Activated T-helper 1 cell treated with anti-CD3 and anti-CD28 coated beads, Interleukin-12 subunit alpha, Interleukin-12 subunit beta, Interleukin-2, Interleukin-4 antibody, amounts not matched to agents 30 ng/mL and 10 ng/mL and 1 ng/mL, durations not matched to agents 14 hours and 24 hours and 36 hours (primary cell): ENCODE measurements at regions of chr7 and their contacts with region 1.

Region 1: GRCh38 chr7:568031-568951 is 48.6 kb upstream of the PDGFA start:
- DNase-seq: no peak
- H3K4me3 Mint-ChIP-seq: no peak overlapping the region
- H3K27ac Mint-ChIP-seq: no peak overlapping the region
- H3K4me1 Mint-ChIP-seq: no peaks in the 10 kb centered on the region
- H3K27me3 Mint-ChIP-seq: no peaks in the 10 kb centered on the region

Region 2: DNA sequence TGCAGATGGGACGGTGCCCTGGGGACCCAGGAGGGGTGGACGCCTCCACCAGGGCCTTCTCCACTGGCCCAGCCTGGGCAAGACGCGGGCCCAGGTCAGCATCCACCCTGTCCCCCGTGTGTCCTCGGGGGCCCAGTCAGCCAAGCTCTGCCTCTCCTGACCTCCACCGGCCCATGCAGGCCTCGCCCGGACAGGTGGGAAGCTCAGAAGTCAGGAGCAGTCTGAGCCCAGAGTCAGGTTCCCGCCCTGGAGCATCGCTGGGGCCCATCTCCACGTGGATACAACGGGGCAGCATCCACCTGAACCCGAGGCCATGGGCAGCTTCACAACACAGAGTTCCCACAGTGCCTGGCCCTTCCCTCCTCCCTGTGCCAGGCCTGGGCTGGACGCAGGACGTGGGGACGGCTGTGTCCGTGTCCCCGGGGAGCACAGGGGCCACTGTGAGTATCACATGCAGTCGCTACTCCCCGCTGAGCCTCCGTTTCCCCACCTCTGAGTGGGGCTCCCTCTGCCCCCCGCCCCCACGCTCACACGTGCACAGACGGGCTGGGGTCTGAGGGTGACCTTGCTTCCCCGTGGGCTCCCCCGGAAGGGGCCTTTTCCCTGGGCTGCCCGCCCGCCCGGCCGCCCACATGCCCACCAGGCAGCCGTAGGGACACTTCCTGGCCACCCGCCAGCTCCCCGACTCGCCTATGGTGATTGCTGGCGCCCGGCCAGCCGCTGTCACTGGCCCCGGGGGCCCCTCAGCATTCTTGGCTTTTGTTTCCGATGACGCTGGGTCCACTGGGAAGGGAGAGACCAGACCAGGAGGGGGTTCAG is 113.0 kb before region 1 on chr7:
- intact Hi-C with region 1: loop called (anchors 10 kb)
- DNase-seq: no peak
- H3K4me3 Mint-ChIP-seq: no peak overlapping the region
- H3K27ac Mint-ChIP-seq: no peak overlapping the region
- H3K4me1 Mint-ChIP-seq: peaks cover 6% of the 10 kb centered on the region
- H3K27me3 Mint-ChIP-seq: peaks cover 10% of the 10 kb centered on the region

Region 3: DNA sequence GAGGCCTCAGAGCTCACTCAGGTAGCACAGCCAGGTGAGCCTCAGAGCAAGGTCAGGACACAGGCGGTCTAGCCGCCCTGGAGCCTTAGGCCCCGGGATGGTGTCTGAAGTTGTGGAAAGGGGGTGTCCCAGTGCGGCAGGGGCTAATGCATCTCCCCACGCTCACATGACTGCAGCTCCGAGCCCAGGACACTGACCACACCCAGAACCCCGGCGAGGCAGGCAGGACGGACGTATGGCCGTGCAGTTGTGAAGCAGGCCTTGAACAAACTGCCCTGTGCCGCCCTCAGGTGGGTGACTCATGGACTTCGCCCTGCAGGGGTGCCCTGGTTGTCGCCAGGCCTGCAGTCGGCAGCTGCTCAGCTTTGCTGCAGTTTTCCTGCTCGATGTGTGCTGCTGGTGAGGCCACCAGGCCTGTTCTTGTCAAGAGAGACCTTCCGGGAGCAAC is 163.8 kb after region 1 on chr7:
- intact Hi-C with region 1: no loop called
- DNase-seq: no peak
- H3K4me3 Mint-ChIP-seq: no peak overlapping the region
- H3K27ac Mint-ChIP-seq: no peak overlapping the region
- H3K4me1 Mint-ChIP-seq: peaks cover 10% of the 10 kb centered on the region
- H3K27me3 Mint-ChIP-seq: no peaks in the 10 kb centered on the region